PC-3 (cell line): ENCODE measurements at regions of chr1 and their contacts with region 1.

Region 1: GRCh38 chr1:162040681-162041080 is 17.0 kb upstream of the OLFML2B start:
- DNase-seq: peak; percentile 58
- ATAC-seq: peak; percentile 51
- H3K4me3 ChIP-seq: no peak overlapping the region
- H3K27ac ChIP-seq: no peak overlapping the region
- H3K4me1 ChIP-seq: peaks cover 8% of the 10 kb centered on the region
- H3K27me3 ChIP-seq: no peaks in the 10 kb centered on the region
- CTCF ChIP-seq: peak; percentile 80

Region 2: DNA sequence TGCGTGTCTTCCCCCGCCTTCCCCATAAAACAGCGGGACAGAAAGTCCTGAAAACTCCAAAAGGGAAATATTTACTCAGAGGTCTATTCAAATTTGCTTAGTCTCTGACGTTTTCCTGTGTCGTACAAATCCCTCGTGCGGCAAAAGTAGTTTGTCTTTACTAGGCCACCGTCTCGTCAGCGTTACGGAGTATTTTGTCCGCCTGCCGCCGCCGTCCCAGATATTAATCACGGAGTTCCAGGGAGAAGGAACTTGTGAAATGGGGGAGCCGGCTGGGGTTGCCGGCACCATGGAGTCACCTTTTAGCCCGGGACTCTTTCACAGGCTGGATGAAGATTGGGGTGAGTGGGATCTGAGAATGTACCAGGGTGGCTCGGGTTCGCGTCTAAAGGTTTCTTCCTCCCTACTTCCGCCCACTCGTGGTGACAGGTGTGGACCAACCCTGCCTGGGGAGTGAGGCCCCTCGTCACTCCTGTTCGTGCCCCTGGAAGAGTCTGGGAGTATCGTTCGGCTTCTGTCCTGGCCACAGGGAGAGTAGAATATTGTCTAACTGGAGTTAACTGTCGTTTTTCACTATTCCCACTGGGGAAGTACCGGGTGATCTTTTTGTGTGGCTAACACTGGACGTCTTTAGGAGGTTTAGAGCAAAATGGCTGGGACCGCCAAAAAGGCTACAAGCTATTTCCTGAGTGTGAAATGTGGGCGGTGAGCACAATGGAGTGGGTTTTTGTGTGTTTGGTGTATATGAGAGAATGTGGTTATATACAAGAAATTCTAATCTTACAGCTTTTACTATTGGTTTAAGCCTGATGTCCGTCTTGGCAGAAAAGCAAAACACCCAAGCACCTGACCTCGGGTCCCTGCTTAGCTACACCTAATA is 274.3 kb before region 1 on chr1 and contains the start of gene ATF6:
- CTCF ChIA-PET with region 1: no interaction called
- POLR2A ChIA-PET with region 1: no interaction called
- intact Hi-C with region 1: loop called (anchors 1 kb)
- DNase-seq: peak; percentile 96
- ATAC-seq: peak; percentile 66
- H3K4me3 ChIP-seq: peak within 1 kb of the TSS; percentile 88
- H3K27ac ChIP-seq: peak within 1 kb of the TSS; percentile 67
- H3K4me1 ChIP-seq: peaks cover 26% of the 10 kb centered on the region
- H3K27me3 ChIP-seq: no peaks in the 10 kb centered on the region
- CTCF ChIP-seq: no peak
- total RNA-seq, gene ATF6: 19.2 and 19.7 TPM in 2 replicates

Region 3: GRCh38 chr1:161816201-161816600 is 224.5 kb before region 1 on chr1:
- CTCF ChIA-PET with region 1: interaction called, 10 read pairs
- POLR2A ChIA-PET with region 1: no interaction called
- intact Hi-C with region 1: no loop called
- DNase-seq: no peak
- ATAC-seq: no peak
- H3K4me3 ChIP-seq: no peak overlapping the region
- H3K27ac ChIP-seq: no peak overlapping the region
- H3K4me1 ChIP-seq: no peaks in the 10 kb centered on the region
- H3K27me3 ChIP-seq: no peaks in the 10 kb centered on the region
- CTCF ChIP-seq: no peak

Region 4: GRCh38 chr1:161864577-161864976 is 176.1 kb before region 1 on chr1:
- CTCF ChIA-PET with region 1: interaction called, 9 read pairs
- POLR2A ChIA-PET with region 1: interaction called, 10 read pairs
- intact Hi-C with region 1: no loop called
- DNase-seq: peak; percentile 32
- ATAC-seq: peak; percentile 79
- H3K4me3 ChIP-seq: no peak overlapping the region
- H3K27ac ChIP-seq: no peak overlapping the region
- H3K4me1 ChIP-seq: no peaks in the 10 kb centered on the region
- H3K27me3 ChIP-seq: no peaks in the 10 kb centered on the region
- CTCF ChIP-seq: peak; percentile 63

Region 5: DNA sequence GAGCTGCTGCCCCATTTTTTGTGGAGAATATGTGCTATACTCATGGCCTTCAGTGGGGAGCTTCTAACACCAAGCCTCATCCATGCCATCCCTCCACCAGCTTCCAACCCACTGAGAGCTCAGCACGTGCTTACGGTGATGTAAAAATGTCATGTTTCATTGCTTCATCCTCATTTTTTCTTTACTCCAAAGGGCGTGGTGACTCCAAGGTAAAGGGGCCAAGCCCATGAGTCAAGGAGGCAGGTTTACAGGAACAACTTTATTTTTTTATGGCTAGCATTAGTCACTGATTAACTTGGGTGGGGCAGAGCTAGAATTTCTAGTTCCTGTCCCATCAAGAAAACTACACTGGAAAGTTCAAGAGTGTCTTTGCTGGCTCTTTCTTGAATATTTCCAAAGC is 340.7 kb after region 1 on chr1 and contains the start of gene C1orf226:
- CTCF ChIA-PET with region 1: interaction called, 10 read pairs
- POLR2A ChIA-PET with region 1: no interaction called
- intact Hi-C with region 1: no loop called
- DNase-seq: peak; percentile 98
- ATAC-seq: peak; percentile 87
- H3K4me3 ChIP-seq: peak within 1 kb of the TSS; percentile 49
- H3K27ac ChIP-seq: peak within 1 kb of the TSS; percentile 95
- H3K4me1 ChIP-seq: peaks cover 27% of the 10 kb centered on the region
- H3K27me3 ChIP-seq: no peaks in the 10 kb centered on the region
- CTCF ChIP-seq: no peak
- total RNA-seq, gene C1orf226: 2.6 and 4.3 TPM in 2 replicates